A549 (cell line): ENCODE measurements at regions of chr3 and their contacts with region 1.

Region 1: GRCh38 chr3:13391308-13391707 is 28.8 kb downstream of the NUP210 start:
- DNase-seq: no peak
- ATAC-seq: peak in 1 of 2 experiments; percentile 45; a peak in 3 of 6 replicates
- H3K4me3 ChIP-seq: no peak overlapping the region
- H3K27ac ChIP-seq: no peak overlapping the region
- H3K4me1 ChIP-seq: no peaks in the 10 kb centered on the region
- CTCF ChIP-seq: peak; percentile 17; the same call in 1 of the 3 replicates
- EP300 ChIP-seq: no peak
- POLR2A ChIP-seq: no peak
- RAD21 ChIP-seq: no peak

Region 2: DNA sequence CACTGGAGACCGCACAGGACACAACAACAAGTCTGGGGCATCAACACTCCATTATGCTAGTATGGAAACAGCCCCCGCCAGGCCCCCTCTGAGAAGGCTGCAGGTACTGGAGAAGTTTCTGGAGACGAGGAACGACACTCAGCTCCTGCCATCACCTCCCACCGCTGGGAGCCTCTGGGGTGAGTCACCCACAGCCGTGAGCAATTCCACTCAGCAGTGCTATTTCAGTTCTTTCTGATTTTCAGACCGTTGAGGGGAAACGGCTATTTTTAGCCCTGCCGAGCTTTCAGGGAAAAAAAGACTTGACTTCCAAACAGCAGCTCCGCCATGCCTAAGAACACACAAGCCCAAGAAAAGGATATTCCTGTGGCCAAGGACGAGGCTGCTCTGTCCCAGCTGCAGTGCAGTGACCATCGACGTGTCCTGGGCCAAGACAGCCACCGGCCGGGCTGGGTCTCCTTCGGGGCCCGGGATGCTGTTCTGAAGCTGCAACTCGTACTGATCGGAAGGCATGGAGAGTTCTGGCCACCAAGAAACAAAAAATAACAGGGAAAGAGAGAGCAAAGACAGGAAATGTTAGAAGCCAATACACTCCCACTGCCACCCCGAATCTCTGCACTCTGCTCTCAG is 12.0 kb before region 1 on chr3:
- CTCF ChIA-PET with region 1: interaction called, 13 read pairs
- POLR2A ChIA-PET with region 1: no interaction called
- DNase-seq: no peak
- ATAC-seq: peak in 1 of 2 experiments; percentile 36; a peak in 2 of 6 replicates
- H3K4me3 ChIP-seq: no peak overlapping the region
- H3K27ac ChIP-seq: no peak overlapping the region
- H3K4me1 ChIP-seq: no peaks in the 10 kb centered on the region
- CTCF ChIP-seq: no peak
- EP300 ChIP-seq: no peak
- POLR2A ChIP-seq: no peak
- RAD21 ChIP-seq: no peak

Region 3: GRCh38 chr3:13405614-13406013 is 14.3 kb after region 1 on chr3:
- CTCF ChIA-PET with region 1: interaction called, 17 read pairs
- POLR2A ChIA-PET with region 1: no interaction called
- DNase-seq: no peak
- ATAC-seq: no peak
- H3K4me3 ChIP-seq: no peak overlapping the region
- H3K27ac ChIP-seq: no peak overlapping the region
- H3K4me1 ChIP-seq: no peaks in the 10 kb centered on the region
- CTCF ChIP-seq: no peak
- EP300 ChIP-seq: no peak
- POLR2A ChIP-seq: no peak
- RAD21 ChIP-seq: no peak